ENCODE measurements at regions of chr15 and their contacts with region 1.

Region 1: GRCh38 chr15:97234851-97235610 is 725.5 kb upstream of the ARRDC4 start:
- DNase-seq: peak in 2 of 3 donors; percentile 10 to 16
- H3K4me3 ChIP-seq: no peak overlapping the region
- H3K4me3 Mint-ChIP-seq: no peak overlapping the region
- H3K27ac ChIP-seq: no peak overlapping the region
- H3K27ac Mint-ChIP-seq: no peak overlapping the region
- H3K4me1 ChIP-seq: no peaks in the 10 kb centered on the region
- H3K4me1 Mint-ChIP-seq: peaks cover 2% of the 10 kb centered on the region
- H3K27me3 ChIP-seq: no peaks in the 10 kb centered on the region
- H3K27me3 Mint-ChIP-seq: peaks cover 0 to 6% (median 2%) of the 10 kb centered on the region in 3 donors
- CTCF ChIP-seq: peak; percentile 81

Region 2: GRCh38 chr15:96356494-96357455 is 878.3 kb before region 1 on chr15:
- intact Hi-C with region 1: loop called (anchors 10 kb)
- DNase-seq: peak; percentile 42 to 72 (median 43)
- H3K4me3 ChIP-seq: peak overlapping the region; percentile 32 to 83 (median 65)
- H3K4me3 Mint-ChIP-seq: peak overlapping the region in 1 of 2 donors; percentile 86
- H3K27ac ChIP-seq: no peak overlapping the region
- H3K27ac Mint-ChIP-seq: peak overlapping the region in 1 of 7 donors; percentile 38
- H3K4me1 ChIP-seq: peaks cover 14 to 19% of the 10 kb centered on the region in 2 donors
- H3K4me1 Mint-ChIP-seq: peaks cover 33% of the 10 kb centered on the region
- H3K27me3 ChIP-seq: peaks cover 92 to 100% of the 10 kb centered on the region in 2 donors
- H3K27me3 Mint-ChIP-seq: peaks cover 0 to 65% (median 45%) of the 10 kb centered on the region in 3 donors
- CTCF ChIP-seq: peak; percentile 93

Region 3: GRCh38 chr15:96977886-96978285 is 257.1 kb before region 1 on chr15:
- intact Hi-C with region 1: no loop called
- DNase-seq: no peak
- H3K4me3 ChIP-seq: no peak overlapping the region
- H3K4me3 Mint-ChIP-seq: no peak overlapping the region
- H3K27ac ChIP-seq: no peak overlapping the region
- H3K27ac Mint-ChIP-seq: no peak overlapping the region
- H3K4me1 ChIP-seq: no peaks in the 10 kb centered on the region
- H3K4me1 Mint-ChIP-seq: no peaks in the 10 kb centered on the region
- H3K27me3 ChIP-seq: no peaks in the 10 kb centered on the region
- H3K27me3 Mint-ChIP-seq: peaks cover 0 to 2% (median 0%) of the 10 kb centered on the region in 3 donors
- CTCF ChIP-seq: no peak

Region 4: DNA sequence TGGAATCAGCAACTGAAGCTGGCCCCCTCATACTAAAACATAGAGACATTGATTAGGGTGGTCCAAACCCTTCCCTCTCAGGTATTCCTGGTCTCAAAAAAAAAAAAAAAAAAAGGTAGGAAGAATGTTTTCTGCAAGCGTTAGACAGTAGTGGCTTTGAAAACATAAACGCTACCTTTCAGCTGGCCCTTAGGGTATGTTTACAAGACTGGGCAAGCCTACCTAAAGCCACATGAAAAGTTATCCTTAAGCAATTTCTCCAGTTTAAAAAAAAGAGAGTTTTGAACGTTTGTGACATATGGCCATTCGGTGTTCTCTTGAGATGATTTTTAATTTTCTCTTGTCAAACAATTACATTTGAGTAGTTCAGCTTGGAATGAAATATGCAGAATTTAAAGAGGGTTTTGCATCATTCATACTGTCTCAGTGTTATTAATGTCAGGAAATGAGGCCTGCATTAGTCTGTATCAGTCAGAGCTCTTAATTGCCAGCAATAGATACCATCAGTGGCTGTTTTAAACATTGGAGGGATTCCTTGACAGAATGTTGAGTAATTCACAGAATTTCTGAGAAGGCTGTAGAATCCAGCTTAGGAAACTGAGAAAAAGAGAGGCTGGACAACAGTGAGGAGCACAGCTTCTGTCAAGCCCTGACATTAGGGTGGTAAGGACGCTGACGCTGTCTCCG is 182.6 kb before region 1 on chr15:
- intact Hi-C with region 1: no loop called
- DNase-seq: no peak
- H3K4me3 ChIP-seq: no peak overlapping the region
- H3K4me3 Mint-ChIP-seq: no peak overlapping the region
- H3K27ac ChIP-seq: no peak overlapping the region
- H3K27ac Mint-ChIP-seq: no peak overlapping the region
- H3K4me1 ChIP-seq: no peaks in the 10 kb centered on the region
- H3K4me1 Mint-ChIP-seq: no peaks in the 10 kb centered on the region
- H3K27me3 ChIP-seq: no peaks in the 10 kb centered on the region
- H3K27me3 Mint-ChIP-seq: no peaks in the 10 kb centered on the region
- CTCF ChIP-seq: no peak

Region 5: GRCh38 chr15:97196048-97197014 is 38.7 kb before region 1 on chr15:
- intact Hi-C with region 1: no loop called
- DNase-seq: no peak
- H3K4me3 ChIP-seq: no peak overlapping the region
- H3K4me3 Mint-ChIP-seq: no peak overlapping the region
- H3K27ac ChIP-seq: no peak overlapping the region
- H3K27ac Mint-ChIP-seq: no peak overlapping the region
- H3K4me1 ChIP-seq: no peaks in the 10 kb centered on the region
- H3K4me1 Mint-ChIP-seq: no peaks in the 10 kb centered on the region
- H3K27me3 ChIP-seq: no peaks in the 10 kb centered on the region
- H3K27me3 Mint-ChIP-seq: peaks cover 0 to 3% (median 2%) of the 10 kb centered on the region in 3 donors
- CTCF ChIP-seq: no peak

Measured in CD14-positive monocyte (primary cell).